Panc1 (cell line): ENCODE measurements at regions of chr15 and their contacts with region 1.

Region 1: DNA sequence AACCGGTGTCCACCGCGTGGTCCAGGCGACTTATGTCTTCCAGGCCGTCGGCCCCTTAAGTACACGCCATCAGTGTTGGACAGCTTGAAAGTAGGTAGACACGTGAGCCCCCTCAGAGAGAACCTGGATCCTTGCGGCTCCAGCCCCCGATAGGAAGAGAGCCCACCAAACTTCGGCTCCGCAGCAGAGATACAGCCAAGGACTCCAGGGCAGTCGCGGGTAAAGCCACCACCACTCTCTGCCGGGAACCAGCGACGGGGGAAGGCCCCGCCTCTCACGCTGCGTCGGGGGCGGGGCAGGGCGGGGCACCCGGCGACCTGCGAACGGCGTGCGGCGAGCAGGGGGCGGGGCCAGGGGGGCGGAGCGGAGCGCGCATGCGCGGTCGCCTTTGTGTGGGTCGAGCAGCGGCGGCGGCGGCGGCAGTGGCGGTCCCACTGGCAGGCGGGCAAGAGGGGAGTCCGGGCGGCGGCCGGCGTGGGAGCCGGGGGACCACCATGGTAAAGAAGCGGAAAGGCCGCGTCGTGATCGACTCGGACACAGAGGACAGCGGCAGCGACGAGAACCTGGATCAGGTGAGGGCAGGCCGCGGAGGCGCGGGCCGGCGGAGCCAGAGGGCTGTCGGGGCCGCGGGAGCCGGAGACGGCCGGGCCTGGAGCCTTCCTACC is at the start of gene RTF1:
- DNase-seq: peak; percentile 66
- ATAC-seq: peak; percentile 95
- H3K4me3 ChIP-seq: peak within 1 kb of the TSS; percentile 67 to 68
- H3K27ac ChIP-seq: peak within 1 kb of the TSS; percentile 91
- H3K4me1 ChIP-seq: peaks cover 22% of the 10 kb centered on the region; the same call in 1 of the 2 replicates
- H3K27me3 ChIP-seq: no peaks in the 10 kb centered on the region
- CTCF ChIP-seq: no peak
- total RNA-seq, gene RTF1: 43.5 TPM

Region 2: DNA sequence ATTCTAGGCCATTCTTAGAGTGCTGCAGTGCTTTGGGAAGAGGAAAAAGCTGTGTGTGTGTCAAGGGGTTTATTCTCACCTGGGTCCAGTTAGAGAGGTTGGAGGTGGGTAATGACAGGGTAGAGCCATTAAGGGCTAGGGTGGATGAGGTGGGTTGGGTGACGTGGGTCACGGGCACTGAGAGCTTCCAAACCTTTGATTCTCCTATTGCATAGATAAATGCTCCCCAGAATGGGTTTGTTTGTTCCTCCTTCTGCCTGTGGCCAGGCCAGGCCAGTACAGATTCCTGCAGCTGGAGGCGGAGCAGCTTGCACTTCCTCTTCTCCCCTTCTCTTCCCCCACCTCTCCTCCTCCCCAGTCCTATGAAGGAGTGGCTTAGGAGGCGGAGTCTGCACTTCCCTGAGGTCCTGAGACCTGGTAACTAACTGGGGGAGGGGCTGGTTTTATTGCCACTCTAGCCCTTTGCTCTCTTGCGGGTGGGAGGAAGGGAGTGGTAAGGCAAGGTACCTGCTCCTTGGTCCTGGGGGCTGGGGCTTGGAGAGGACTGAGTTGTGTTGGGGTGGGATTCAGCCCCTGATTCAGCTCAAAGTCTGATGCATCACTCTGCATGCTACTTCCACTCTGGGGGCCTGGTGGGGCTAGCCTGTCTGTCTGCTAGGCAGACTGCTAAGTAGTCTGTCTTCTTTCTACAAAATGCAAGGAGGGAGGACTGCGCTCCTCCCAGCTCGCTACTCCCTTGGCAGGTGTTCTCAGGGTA is 569.5 kb before region 1 on chr15:
- CTCF ChIA-PET with region 1: no interaction called
- POLR2A ChIA-PET with region 1: no interaction called
- in situ Hi-C with region 1: no loop called
- intact Hi-C with region 1: no loop called
- DNase-seq: no peak
- ATAC-seq: peak; percentile 42
- H3K4me3 ChIP-seq: no peak overlapping the region
- H3K27ac ChIP-seq: no peak overlapping the region
- H3K4me1 ChIP-seq: peaks cover 3% of the 10 kb centered on the region; the same call in 1 of the 2 replicates
- H3K27me3 ChIP-seq: no peaks in the 10 kb centered on the region
- CTCF ChIP-seq: no peak

Region 3: DNA sequence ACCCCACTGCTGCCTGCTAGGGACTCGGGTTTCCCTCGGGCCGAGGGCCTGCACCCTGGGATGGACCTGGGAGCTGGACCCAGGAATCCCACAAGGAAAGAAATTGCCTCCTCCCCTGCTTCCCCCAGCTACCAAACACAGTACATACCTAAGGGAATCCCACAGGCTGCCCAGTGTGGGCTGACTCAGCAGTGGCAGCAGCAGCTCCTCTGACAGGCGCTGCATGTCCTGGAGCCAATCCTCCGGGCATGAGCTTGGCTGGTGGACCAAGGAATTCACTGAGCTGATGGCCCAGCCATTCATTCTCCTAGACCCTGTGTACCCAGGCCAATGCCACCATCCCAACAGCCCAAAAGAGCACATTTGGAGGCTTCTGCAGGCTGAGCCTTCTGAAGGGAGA is 106.2 kb after region 1 on chr15:
- CTCF ChIA-PET with region 1: no interaction called
- POLR2A ChIA-PET with region 1: interaction called, 13 read pairs
- in situ Hi-C with region 1: no loop called
- intact Hi-C with region 1: no loop called
- DNase-seq: no peak
- ATAC-seq: peak; percentile 38; the same call in 1 of the 2 replicates
- H3K4me3 ChIP-seq: no peak overlapping the region
- H3K27ac ChIP-seq: no peak overlapping the region
- H3K4me1 ChIP-seq: no peaks in the 10 kb centered on the region
- H3K27me3 ChIP-seq: no peaks in the 10 kb centered on the region
- CTCF ChIP-seq: no peak